H1 (cell line): ENCODE measurements at regions of chr3 and their contacts with region 1.

Region 1: DNA sequence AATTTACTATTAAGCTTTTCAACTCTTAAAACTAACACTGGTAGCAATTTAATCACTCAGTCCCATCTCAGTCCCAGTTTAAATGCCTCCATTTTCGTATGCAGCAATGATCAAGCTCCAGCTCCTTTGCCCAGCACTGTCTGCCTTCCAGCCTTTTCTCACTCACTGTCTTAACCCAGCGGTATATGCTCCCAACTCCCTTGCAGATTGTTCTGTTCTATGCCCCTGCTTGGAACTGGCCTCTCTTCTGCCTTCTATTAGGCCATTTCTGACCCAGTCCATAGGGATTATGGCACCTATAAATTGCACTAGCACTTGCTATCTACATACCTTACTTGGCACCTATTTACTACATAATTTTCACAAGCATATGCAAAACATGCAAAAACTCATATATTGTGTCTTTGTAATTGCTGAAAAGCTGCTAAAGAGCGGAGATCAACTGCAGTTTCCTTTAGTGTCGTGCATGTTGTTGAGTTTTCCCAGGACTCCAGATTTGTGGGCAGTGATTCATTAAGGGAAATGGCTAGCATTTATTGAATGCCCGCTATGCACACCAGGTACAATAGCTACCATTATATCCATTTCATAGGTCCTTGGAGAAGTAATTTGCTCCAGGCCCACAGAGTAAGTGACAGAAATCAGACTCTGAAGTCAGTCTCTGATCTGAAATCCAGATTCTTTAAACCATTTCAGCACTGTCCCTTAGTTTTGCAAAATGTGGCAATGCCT is 24.4 kb downstream of the CRBN start:
- DNase-seq: no peak
- H3K4me3 ChIP-seq: no peak overlapping the region
- H3K27ac ChIP-seq: no peak overlapping the region
- H3K4me1 ChIP-seq: no peaks in the 10 kb centered on the region
- H3K27me3 ChIP-seq: no peaks in the 10 kb centered on the region
- CTCF ChIP-seq: no peak
- EP300 ChIP-seq: no peak
- POLR2A ChIP-seq: no peak
- RAD21 ChIP-seq: no peak

Region 2: DNA sequence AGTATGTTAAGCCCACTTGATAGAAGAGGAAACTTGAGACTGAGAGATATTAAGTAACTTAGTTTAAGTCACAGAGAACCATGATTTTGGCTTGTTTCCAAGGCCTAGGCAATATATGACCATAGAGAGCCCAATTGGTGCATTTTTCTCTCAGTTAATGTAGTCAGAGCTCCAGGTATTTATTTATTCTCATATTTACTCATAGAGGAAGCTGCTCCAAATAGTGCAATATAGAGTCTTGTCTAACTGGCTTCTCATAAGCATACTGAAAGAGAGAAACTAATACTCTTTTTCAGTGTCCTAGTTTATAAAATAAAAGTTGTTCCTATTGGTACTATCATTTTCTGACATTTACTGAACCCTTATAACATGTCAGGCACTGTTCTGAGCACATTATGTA is 13.1 kb before region 1 on chr3:
- CTCF ChIA-PET with region 1: no interaction called
- POLR2A ChIA-PET with region 1: interaction called, 33 read pairs
- DNase-seq: no peak
- H3K4me3 ChIP-seq: no peak overlapping the region
- H3K27ac ChIP-seq: no peak overlapping the region
- H3K4me1 ChIP-seq: no peaks in the 10 kb centered on the region
- H3K27me3 ChIP-seq: no peaks in the 10 kb centered on the region
- CTCF ChIP-seq: no peak
- EP300 ChIP-seq: no peak
- POLR2A ChIP-seq: no peak
- RAD21 ChIP-seq: no peak

Region 3: DNA sequence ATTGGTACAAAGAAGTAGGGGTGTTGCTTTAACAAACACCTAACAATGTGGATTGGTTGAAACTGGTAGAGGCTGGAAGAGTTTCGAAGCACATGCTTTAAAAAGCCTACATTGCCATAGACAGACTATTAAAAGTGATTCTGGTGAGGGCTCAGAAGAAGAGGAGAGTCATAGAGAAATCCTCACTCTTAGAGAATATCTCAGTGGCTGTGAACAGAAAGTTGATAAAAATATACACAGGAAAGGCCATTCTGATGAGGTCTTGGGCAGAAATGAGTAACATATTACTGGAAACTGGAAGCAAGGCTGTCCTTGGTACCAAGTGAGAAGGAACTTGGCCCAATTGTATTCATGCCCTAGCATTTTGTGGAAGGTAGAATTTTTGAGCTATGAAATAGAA is 198.1 kb after region 1 on chr3:
- CTCF ChIA-PET with region 1: no interaction called
- POLR2A ChIA-PET with region 1: no interaction called
- DNase-seq: no peak
- H3K4me3 ChIP-seq: no peak overlapping the region
- H3K27ac ChIP-seq: no peak overlapping the region
- H3K4me1 ChIP-seq: no peaks in the 10 kb centered on the region
- H3K27me3 ChIP-seq: no peaks in the 10 kb centered on the region
- CTCF ChIP-seq: no peak
- EP300 ChIP-seq: no peak
- POLR2A ChIP-seq: no peak
- RAD21 ChIP-seq: no peak